ENCODE measurements at regions of chr16 and their contacts with region 1.

Region 1: DNA sequence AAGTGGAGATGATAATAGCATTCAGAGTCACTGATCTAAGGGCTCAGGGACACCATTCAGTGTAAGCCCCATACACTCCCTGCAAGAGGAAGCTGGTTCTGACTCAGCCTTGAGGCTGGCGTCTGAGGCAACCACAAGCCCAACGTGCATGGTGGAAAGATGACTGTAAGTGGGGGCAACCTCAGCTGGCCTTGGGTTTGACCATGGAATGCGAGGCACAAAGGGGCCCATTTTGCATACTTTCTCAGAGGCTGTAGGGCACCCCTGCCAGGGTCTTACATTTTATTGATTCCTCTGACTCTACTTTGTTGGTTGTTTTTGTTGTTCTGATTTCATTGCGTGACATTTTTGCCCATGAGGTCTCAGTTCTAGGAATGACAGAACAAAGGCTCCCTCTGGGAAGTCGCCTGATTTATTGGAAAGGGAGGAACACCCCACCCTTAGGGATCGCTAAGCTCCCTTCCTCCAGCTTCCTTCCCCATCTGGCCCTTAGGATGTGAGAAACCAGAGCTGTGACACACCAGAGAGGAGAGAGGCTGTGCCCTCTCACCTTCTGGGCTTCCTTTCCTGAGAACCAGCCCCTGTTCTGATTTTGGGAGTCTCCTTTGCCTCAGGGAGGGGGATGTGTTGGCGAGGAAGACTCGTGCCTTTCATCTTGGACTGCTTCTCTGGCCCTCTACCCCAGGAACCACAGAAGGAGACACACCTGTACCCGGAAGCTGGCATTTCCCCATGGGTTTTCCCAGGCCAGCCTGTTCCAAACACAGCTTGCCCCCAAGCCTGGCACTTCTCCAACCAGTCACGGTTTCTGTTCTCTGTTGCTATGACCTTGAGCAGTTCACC is 5.6 kb upstream of the CIITA start:
- DNase-seq: peak; percentile 73
- ATAC-seq: peak; percentile 37
- H3K4me3 ChIP-seq: peak overlapping the region in 3 of 5 experiments; percentile 3 to 6 (median 3)
- H3K4me3 Mint-ChIP-seq: peak overlapping the region; percentile 83
- H3K27ac ChIP-seq: peak overlapping the region; percentile 91 to 92
- H3K27ac Mint-ChIP-seq: peak overlapping the region; percentile 93
- H3K4me1 ChIP-seq: peaks cover 93 to 98% of the 10 kb centered on the region in 2 donors
- H3K4me1 Mint-ChIP-seq: peaks cover 95% of the 10 kb centered on the region
- H3K27me3 ChIP-seq: no peaks in the 10 kb centered on the region
- H3K27me3 Mint-ChIP-seq: no peaks in the 10 kb centered on the region
- CTCF ChIP-seq: no peak

Region 2: GRCh38 chr16:9012848-9013507 is 1858.4 kb before region 1 on chr16:
- CTCF ChIA-PET with region 1: no interaction called
- POLR2A ChIA-PET with region 1: no interaction called
- intact Hi-C with region 1: no loop called
- DNase-seq: peak; percentile 22
- ATAC-seq: no peak
- H3K4me3 ChIP-seq: no peak overlapping the region
- H3K4me3 Mint-ChIP-seq: no peak overlapping the region
- H3K27ac ChIP-seq: no peak overlapping the region
- H3K27ac Mint-ChIP-seq: no peak overlapping the region
- H3K4me1 ChIP-seq: peaks cover 8 to 10% of the 10 kb centered on the region in 2 donors
- H3K4me1 Mint-ChIP-seq: peaks cover 8% of the 10 kb centered on the region
- H3K27me3 ChIP-seq: peaks cover 0 to 29% (median 7%) of the 10 kb centered on the region in 4 experiments
- H3K27me3 Mint-ChIP-seq: peaks cover 29% of the 10 kb centered on the region
- CTCF ChIP-seq: no peak

Region 3: DNA sequence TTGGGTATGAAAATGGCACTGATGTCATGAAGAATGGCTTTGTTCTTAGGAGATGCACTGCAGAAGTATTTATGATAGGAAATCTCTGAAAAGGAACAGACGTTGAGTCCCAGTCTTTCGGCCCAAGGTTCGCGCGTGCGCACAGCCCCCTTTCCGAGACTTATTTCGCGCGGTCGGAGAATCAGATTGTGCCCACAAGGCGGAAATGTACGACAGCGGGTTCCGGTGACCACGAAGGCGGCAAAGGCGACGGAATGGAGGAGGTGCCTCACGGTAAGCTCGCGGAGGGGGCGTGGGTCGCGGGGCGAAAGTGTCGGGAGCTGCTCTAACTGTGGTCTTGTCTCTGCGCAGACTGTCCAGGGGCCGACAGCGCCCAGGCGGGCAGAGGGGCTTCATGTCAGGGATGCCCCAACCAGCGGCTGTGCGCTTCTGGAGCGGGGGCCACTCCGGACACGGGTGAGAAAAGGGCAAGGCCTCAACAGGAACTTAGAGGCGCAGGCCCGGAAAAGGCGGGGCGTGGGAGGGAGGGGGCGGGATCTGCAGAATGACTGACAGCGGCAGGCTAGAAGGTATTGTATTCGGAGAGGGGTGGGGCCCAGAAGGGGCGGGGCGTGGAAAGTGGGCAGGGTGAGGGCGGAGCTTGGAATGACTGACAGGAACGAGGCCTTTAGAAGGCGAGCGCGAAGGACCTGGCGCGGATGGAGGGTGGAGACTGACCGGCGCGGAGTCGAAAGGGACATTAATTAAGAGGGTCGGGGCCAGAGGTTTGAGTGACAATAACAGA is 127.6 kb before region 1 on chr16 and contains the start of gene NUBP1:
- CTCF ChIA-PET with region 1: interaction called, 21 read pairs
- POLR2A ChIA-PET with region 1: interaction called, 38 read pairs
- intact Hi-C with region 1: loop called (anchors 1 kb)
- DNase-seq: peak; percentile 100
- ATAC-seq: peak; percentile 93
- H3K4me3 ChIP-seq: peak within 1 kb of the TSS; percentile 61 to 85 (median 73)
- H3K4me3 Mint-ChIP-seq: peak within 1 kb of the TSS; percentile 93
- H3K27ac ChIP-seq: peak within 1 kb of the TSS; percentile 93 to 97
- H3K27ac Mint-ChIP-seq: peak within 1 kb of the TSS; percentile 97
- H3K4me1 ChIP-seq: peaks cover 31 to 37% of the 10 kb centered on the region in 2 donors
- H3K4me1 Mint-ChIP-seq: peaks cover 55% of the 10 kb centered on the region
- H3K27me3 ChIP-seq: no peaks in the 10 kb centered on the region
- H3K27me3 Mint-ChIP-seq: no peaks in the 10 kb centered on the region
- CTCF ChIP-seq: no peak
- total RNA-seq, gene NUBP1: 54.3 and 67.3 TPM in 2 replicates

Region 4: DNA sequence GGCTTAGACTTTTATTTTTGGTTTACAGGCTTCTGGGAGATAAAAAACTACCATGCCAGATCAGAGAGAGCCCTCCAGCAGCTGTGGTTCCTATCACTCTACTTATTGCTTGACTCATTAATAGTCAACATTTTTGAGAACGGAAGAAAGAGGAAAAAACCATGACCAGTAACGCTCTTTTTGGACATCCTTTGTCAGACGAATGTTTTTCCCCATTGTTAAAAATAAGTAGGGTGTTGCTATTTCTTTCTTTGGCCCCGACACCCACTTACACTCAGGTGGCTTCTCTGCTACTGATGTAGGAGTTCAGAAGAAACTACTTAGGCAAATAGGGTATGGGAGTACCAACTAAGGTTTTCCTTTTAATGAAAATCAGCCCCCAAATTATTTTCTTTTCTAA is 80.3 kb before region 1 on chr16:
- CTCF ChIA-PET with region 1: interaction called, 3 read pairs
- POLR2A ChIA-PET with region 1: no interaction called
- intact Hi-C with region 1: loop called (anchors 5 kb)
- DNase-seq: peak; percentile 29
- ATAC-seq: peak; percentile 11
- H3K4me3 ChIP-seq: peak overlapping the region in 1 of 5 experiments; percentile 10
- H3K4me3 Mint-ChIP-seq: peak overlapping the region; percentile 10
- H3K27ac ChIP-seq: peak overlapping the region in 1 of 2 donors; percentile 69
- H3K27ac Mint-ChIP-seq: peak overlapping the region; percentile 68
- H3K4me1 ChIP-seq: peaks cover 32 to 41% of the 10 kb centered on the region in 2 donors
- H3K4me1 Mint-ChIP-seq: peaks cover 63% of the 10 kb centered on the region
- H3K27me3 ChIP-seq: no peaks in the 10 kb centered on the region
- H3K27me3 Mint-ChIP-seq: no peaks in the 10 kb centered on the region
- CTCF ChIP-seq: no peak

Region 5: DNA sequence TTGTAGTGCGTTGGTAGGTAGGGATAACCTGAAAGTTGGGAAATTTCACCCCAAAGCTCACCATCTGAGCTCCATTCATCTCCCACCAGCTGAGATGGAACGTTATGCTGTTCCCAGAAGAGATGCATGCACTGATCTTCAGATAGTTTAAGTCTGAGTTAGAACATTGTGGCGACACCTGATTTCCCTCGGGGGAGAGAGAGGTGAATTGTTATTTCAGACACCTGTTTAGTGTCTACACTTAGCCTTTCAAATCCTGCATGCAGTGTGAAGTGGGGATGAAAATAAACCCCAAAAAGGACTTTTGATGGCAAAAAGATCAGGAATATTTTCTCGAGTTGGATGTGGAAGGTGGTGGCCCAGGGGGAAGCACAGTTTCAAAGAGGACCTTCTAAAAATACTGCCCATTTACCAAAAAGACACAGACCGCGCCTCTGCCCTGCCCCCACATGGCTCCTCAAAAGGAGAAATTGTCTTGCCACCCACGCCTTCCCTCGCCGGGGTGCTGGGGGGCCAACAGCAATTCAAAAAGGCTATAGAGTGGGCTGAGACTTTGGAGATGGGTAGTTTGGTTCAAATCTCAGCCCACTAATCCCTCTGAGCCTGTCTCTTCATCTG is 17.1 kb after region 1 on chr16:
- CTCF ChIA-PET with region 1: interaction called, 120 read pairs
- POLR2A ChIA-PET with region 1: interaction called, 122 read pairs
- intact Hi-C with region 1: loop called (anchors 1 kb)
- DNase-seq: peak; percentile 69
- ATAC-seq: peak; percentile 15
- H3K4me3 ChIP-seq: peak overlapping the region; percentile 41 to 76 (median 47)
- H3K4me3 Mint-ChIP-seq: peak overlapping the region; percentile 81
- H3K27ac ChIP-seq: peak overlapping the region; percentile 74 to 85
- H3K27ac Mint-ChIP-seq: peak overlapping the region; percentile 87
- H3K4me1 ChIP-seq: peaks cover 98 to 100% of the 10 kb centered on the region in 2 donors
- H3K4me1 Mint-ChIP-seq: peaks cover 96% of the 10 kb centered on the region
- H3K27me3 ChIP-seq: no peaks in the 10 kb centered on the region
- H3K27me3 Mint-ChIP-seq: no peaks in the 10 kb centered on the region
- CTCF ChIP-seq: no peak

Region 6: GRCh38 chr16:10906914-10907756 is 35.8 kb after region 1 on chr16:
- CTCF ChIA-PET with region 1: interaction called, 12 read pairs
- POLR2A ChIA-PET with region 1: interaction called, 59 read pairs
- intact Hi-C with region 1: loop called (anchors 1 kb)
- DNase-seq: no peak
- ATAC-seq: no peak
- H3K4me3 ChIP-seq: no peak overlapping the region
- H3K4me3 Mint-ChIP-seq: no peak overlapping the region
- H3K27ac ChIP-seq: peak overlapping the region in 1 of 2 donors; percentile 95
- H3K27ac Mint-ChIP-seq: peak overlapping the region; percentile 67
- H3K4me1 ChIP-seq: peaks cover 43 to 55% of the 10 kb centered on the region in 2 donors
- H3K4me1 Mint-ChIP-seq: peaks cover 70% of the 10 kb centered on the region
- H3K27me3 ChIP-seq: no peaks in the 10 kb centered on the region
- H3K27me3 Mint-ChIP-seq: no peaks in the 10 kb centered on the region
- CTCF ChIP-seq: no peak

Measured in B cell (primary cell).